ENCODE measurements at regions of chr16 and their contacts with region 1.

Region 1: DNA sequence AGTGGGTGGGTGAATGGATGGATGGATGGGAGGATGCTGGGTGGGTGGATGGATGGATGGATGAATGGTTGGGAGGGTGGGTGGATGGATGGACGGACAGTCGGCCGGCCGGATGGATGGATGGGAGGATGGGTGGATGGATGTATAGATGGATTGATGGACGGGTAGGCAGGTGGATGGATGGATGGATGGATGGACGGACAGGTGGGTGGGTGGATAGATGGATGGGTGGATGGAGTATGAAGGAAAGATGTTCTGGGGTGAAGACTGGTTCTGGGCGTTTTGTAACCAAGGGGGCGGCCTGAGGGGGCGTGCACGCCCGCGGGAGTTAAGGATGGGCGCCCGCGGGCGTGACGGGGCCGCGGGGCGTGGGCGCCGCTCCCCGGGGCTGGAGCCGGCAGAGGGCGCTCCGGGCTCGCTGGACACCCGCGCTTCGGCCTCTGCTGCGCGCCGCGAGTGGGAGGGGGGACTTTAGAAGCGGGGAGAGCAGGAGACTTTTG is at the start of gene NECAB2:
- DNase-seq: no peak
- H3K4me3 ChIP-seq: peak within 1 kb of the TSS in 1 of 2 donors; percentile 34
- H3K27ac ChIP-seq: no peak within 1 kb of the TSS
- H3K4me1 ChIP-seq: peaks cover 0 to 3% of the 10 kb centered on the region in 2 donors
- H3K27me3 ChIP-seq: peaks cover 0 to 12% of the 10 kb centered on the region in 2 donors
- CTCF ChIP-seq: peak; percentile 35 to 57 (median 47)
- POLR2A ChIP-seq: no peak
- total RNA-seq, gene NECAB2: 1.1 to 1.4 TPM in 2 of 4 donors, not detected in the others

Region 2: DNA sequence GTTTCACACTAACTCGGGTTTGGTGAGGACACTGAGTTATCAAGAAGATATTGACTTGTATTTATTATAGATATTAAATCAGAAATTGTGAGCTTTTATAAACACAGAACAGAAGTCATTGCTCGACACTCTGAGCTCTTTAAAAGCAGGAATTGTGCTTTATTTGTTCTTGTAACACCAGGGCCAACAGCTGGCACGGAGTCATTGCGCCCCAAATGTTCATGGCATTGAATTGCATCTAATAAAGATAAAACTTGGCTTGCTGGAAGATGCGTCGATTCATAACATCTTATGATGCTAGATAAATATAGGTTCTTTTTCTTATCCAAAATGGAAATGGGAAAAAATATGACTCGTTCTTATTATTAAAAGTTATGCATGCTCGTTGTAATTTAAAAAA is 80.8 kb before region 1 on chr16:
- intact Hi-C with region 1: no loop called
- DNase-seq: no peak
- H3K4me3 ChIP-seq: no peak overlapping the region
- H3K27ac ChIP-seq: no peak overlapping the region
- H3K4me1 ChIP-seq: no peaks in the 10 kb centered on the region
- H3K27me3 ChIP-seq: no peaks in the 10 kb centered on the region
- CTCF ChIP-seq: no peak
- POLR2A ChIP-seq: no peak

Region 3: GRCh38 chr16:84029297-84030047 is 61.6 kb after region 1 on chr16:
- intact Hi-C with region 1: no loop called
- DNase-seq: no peak
- H3K4me3 ChIP-seq: no peak overlapping the region
- H3K27ac ChIP-seq: no peak overlapping the region
- H3K4me1 ChIP-seq: no peaks in the 10 kb centered on the region
- H3K27me3 ChIP-seq: no peaks in the 10 kb centered on the region
- CTCF ChIP-seq: no peak
- POLR2A ChIP-seq: no peak

Region 4: DNA sequence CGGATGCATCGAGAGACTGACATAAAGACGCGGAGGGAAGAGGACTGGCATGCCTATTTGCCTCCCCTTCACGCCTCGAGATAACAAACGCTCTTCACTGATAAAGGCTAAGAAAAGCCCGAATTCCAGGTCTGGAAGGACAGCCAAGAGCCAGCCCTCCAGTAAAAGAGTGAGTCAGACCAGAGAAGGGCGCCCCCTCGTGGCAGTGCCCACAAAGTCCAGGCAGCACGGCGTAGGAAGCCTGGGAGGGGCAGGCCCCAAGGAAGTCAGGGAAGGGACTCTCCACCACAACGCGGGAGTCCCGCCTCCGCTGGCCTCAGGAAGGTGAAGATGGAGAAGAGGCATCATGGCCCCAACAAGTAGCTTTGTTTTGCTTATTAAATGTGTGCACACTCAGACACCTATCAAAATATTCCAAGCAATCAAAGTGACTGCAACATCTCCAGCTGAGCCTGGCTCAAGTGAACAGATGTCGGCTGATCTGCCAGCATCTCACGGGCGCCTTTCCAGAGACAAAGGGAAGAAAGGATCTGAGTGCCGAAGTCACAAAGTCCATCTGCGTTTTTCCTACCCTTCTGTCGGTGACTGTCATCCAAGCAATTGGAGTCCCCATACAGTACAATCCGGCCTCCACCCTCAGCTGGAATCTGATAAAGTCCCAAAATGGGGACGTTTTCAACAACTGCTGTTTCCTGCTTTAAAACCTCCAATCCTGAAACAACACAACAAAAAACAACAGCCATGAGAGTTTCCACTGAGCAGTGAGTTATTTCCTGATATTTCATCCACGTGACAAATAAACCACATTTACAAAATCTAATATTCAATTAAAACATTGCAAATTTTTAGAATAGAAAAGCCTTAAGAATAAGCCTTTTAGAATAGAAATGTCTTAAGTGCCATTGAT is 95.1 kb after region 1 on chr16:
- intact Hi-C with region 1: loop called (anchors 10 kb)
- DNase-seq: peak; percentile 49 to 68
- H3K4me3 ChIP-seq: no peak overlapping the region
- H3K27ac ChIP-seq: no peak overlapping the region
- H3K4me1 ChIP-seq: no peaks in the 10 kb centered on the region
- H3K27me3 ChIP-seq: no peaks in the 10 kb centered on the region
- CTCF ChIP-seq: peak; percentile 54 to 60 (median 56)
- POLR2A ChIP-seq: no peak

Measured in uterus (tissue), 4 donors.